ENCODE measurements at regions of chr1 and their contacts with region 1.

Region 1: DNA sequence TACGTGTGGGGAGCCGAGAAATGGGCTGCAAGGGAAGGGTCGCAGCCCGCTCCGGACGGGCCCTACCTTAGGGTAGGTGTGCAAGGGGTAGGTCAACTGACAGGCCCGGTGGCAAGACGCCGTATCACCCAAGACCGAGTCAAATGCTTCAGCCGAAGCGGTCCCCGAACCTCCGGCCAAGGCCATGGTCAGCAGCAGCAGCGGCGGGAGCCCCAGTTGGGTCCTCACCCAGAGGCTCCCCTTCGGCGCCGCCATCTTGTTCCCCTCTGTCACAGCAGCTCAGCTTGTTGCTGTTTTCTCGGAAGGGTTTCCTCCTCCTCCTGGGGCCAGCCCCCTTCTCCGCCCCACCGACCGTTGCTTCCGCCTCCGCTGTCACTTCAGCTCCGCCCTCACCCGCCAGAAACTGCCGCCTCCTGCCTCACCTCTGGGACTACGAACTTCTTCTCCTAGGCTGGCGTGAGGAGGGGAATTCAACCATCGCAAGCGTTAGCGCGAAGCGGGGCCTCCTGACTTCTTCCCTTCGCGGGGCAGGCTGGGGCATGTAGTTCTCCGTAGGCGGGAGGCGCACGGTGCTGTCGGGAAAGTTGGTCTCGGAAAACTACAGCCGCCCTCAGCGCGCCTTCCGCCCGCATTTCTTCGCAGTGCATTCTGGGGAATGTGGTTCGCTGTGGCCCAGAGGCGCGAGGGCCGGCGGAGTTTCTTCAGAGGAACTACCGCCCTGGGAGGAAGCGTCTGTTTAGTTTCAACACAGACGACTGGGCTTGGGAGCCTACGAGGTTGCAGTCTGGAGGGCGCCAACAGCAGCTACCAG is at the starts of genes TCEANC2 and TMEM59:
- DNase-seq: peak; percentile 98 to 99 (median 99)
- H3K4me3 ChIP-seq: peak within 1 kb of the TSS; percentile 90 to 99 (median 93)
- H3K4me3 Mint-ChIP-seq: no peak within 1 kb of the TSS
- H3K27ac ChIP-seq: peak within 1 kb of the TSS; percentile 89 to 97
- H3K27ac Mint-ChIP-seq: peak within 1 kb of the TSS in 1 of 7 donors; percentile 69
- H3K4me1 ChIP-seq: peaks cover 22 to 38% of the 10 kb centered on the region in 2 donors
- H3K4me1 Mint-ChIP-seq: peaks cover 27% of the 10 kb centered on the region
- H3K27me3 ChIP-seq: no peaks in the 10 kb centered on the region
- H3K27me3 Mint-ChIP-seq: no peaks in the 10 kb centered on the region
- CTCF ChIP-seq: no peak
- polyA plus RNA-seq, gene TCEANC2: 3.0 to 6.7 (median 3.8) TPM
- polyA plus RNA-seq, gene TMEM59: 169 to 925 (median 831) TPM

Region 2: GRCh38 chr1:53837924-53838652 is 215.1 kb before region 1 on chr1 and contains the start of gene NDC1:
- intact Hi-C with region 1: loop called (anchors 2 to 5 kb)
- DNase-seq: peak; percentile 86 to 89 (median 88)
- H3K4me3 ChIP-seq: peak within 1 kb of the TSS; percentile 83 to 93 (median 86)
- H3K4me3 Mint-ChIP-seq: peak within 1 kb of the TSS; percentile 93 to 98
- H3K27ac ChIP-seq: peak within 1 kb of the TSS; percentile 87 to 89
- H3K27ac Mint-ChIP-seq: peak within 1 kb of the TSS; percentile 94 to 99 (median 97)
- H3K4me1 ChIP-seq: peaks cover 8 to 16% of the 10 kb centered on the region in 2 donors
- H3K4me1 Mint-ChIP-seq: peaks cover 22% of the 10 kb centered on the region
- H3K27me3 ChIP-seq: no peaks in the 10 kb centered on the region
- H3K27me3 Mint-ChIP-seq: peaks cover 1 to 4% (median 2%) of the 10 kb centered on the region in 3 donors
- CTCF ChIP-seq: peak; percentile 5
- polyA plus RNA-seq, gene NDC1: 3.0 to 6.1 (median 4.7) TPM

Region 3: DNA sequence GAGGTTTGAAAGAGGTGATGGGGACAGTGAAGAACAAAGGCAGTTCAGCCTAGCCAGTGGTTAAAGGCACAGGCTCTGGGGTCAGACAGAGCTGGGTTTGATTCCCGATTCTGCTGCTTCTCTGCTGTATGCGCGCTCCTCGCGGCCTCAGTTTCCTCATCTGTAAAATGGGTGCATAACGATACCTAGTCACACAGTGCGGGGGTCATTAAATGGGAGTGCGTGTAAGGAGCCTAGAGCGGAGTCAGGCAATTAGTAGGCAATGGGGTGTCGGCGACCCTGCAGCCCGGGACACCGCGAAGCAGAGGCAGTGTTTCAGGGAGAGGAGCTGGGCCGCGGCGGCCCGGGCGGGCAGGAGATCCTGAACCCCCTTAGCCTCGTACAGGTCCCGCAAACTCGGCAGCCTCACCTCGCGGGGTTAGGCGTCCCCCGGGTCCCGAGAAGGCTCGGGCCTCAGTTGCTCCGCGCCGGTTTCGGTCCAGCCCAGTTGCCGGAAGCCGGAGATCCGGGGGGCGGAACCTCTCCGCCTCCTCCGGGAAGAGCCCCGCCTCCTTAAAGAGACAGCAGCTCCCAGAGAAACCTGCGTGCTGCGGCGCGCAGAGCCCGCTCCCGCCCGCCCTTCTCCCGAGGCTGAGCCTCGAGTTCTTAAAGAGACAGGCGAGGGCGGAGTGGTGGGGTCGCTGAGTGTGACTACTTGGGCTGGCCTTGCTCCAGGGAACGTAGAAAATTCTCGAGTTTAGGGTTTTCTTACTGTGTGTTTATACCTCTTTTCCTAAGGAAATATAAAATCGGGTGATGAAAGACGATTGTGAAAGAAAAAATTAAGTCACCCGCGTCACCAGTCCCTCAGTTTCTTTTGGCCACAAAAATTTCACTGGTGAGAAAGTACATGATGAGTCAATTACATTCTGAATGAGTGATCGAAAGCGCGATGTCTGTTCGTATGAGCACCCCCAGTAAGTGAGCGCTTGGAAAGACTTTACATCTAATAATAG is 163.5 kb before region 1 on chr1 and contains the start of gene YIPF1:
- intact Hi-C with region 1: loop called in 1 of 2 experiments (anchors 10 kb)
- DNase-seq: peak; percentile 68 to 92 (median 81)
- H3K4me3 ChIP-seq: peak within 1 kb of the TSS; percentile 68 to 88 (median 82)
- H3K4me3 Mint-ChIP-seq: peak within 1 kb of the TSS; percentile 94 to 96
- H3K27ac ChIP-seq: peak within 1 kb of the TSS; percentile 72 to 83
- H3K27ac Mint-ChIP-seq: peak within 1 kb of the TSS; percentile 89 to 97 (median 96)
- H3K4me1 ChIP-seq: peaks cover 29 to 43% of the 10 kb centered on the region in 2 donors
- H3K4me1 Mint-ChIP-seq: peaks cover 48% of the 10 kb centered on the region
- H3K27me3 ChIP-seq: no peaks in the 10 kb centered on the region
- H3K27me3 Mint-ChIP-seq: peaks cover 0 to 2% (median 2%) of the 10 kb centered on the region in 3 donors
- CTCF ChIP-seq: no peak
- polyA plus RNA-seq, gene YIPF1: 24.4 to 51.9 (median 42.1) TPM

Region 4: DNA sequence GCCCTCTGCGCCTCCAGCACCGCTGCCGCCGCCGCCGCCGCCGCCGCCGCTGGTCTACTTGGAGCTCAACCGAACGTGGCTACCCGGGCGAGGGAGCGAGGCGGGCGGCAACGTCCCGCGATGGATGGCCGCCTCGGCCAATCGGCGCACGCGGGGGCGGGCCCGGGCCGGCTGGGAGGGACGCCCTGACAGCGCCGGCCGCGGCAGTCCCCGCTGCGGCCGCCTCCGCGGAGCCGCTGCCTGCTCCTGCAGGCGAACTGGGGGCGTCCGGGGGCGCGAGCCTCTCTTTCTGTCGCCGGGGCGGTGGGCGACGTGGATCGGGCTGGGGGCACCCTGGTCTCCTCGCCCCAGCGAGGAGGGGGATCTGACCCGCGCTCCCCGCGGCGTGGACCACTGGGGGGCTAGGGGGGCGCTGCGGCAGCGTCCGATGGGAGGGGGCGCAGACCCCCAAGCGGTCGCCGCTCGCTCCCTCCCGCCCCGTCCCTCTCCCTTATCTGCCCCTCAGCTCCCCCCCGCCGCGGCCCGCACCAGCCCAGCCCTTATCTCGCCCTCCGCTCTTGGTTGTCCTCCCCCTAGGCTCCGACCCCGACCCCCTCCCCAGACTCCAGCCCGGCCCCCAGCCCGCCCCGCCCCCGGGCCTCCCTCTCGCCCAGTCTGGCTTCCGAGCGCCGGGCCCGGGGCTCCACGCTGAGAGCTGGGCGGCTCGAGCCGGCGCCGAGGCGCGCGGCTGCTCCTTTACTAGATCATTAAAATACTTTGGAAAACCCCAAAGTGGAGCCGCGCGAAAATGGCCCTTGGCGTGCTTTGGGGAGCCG is 353.4 kb after region 1 on chr1 and contains the start of gene SSBP3:
- intact Hi-C with region 1: loop called (anchors 2 to 10 kb)
- DNase-seq: peak; percentile 83 to 88 (median 85)
- H3K4me3 ChIP-seq: peak within 1 kb of the TSS; percentile 61 to 97 (median 96)
- H3K4me3 Mint-ChIP-seq: peak within 1 kb of the TSS; percentile 86 to 92
- H3K27ac ChIP-seq: peak within 1 kb of the TSS; percentile 57 to 92
- H3K27ac Mint-ChIP-seq: peak within 1 kb of the TSS; percentile 87 to 93 (median 90)
- H3K4me1 ChIP-seq: peaks cover 32 to 54% of the 10 kb centered on the region in 2 donors
- H3K4me1 Mint-ChIP-seq: peaks cover 51% of the 10 kb centered on the region
- H3K27me3 ChIP-seq: peaks cover 0 to 8% of the 10 kb centered on the region in 2 donors
- H3K27me3 Mint-ChIP-seq: peaks cover 8 to 13% (median 11%) of the 10 kb centered on the region in 3 donors
- CTCF ChIP-seq: peak; percentile 7
- polyA plus RNA-seq, gene SSBP3: 4.1 to 30.7 (median 4.3) TPM

Region 5: DNA sequence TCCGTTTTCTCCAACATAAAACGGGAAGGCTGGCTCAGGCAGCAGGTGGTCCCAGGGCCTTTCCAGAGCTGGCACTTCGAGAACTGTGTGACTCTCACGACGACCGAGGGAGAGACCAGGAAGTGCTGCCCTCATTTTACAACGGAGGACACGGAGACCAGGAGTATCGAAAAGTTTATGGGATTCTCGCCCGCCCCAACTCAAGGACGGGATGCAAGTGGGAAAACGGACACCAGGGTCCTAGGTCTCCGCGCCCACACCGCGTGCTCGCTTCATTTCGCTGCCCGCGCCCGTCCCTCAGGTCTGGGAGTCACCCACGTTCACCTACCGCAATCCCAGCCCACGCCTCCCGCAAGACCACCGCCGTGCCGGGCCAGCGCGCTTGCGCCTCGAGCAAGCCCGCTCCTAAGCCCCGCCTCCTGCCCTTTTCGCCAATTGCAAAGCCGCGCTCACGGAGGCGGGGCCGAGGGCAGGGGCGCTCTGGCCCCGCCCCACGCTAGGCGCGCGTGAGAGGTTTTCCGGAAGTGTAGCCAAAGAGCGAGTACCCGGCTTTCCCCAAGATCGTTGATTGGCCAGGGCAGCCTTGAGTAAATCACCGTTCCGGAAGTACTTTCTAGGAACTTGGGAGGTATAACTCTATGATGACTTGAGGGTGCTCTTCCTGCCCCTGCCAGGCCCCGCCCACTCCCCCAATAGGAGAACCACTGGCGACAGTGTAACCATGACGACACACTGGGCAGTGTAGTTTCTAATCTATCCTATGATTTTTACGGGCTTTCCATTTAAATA is 711.2 kb after region 1 on chr1 and contains the start of gene PARS2:
- intact Hi-C with region 1: loop called (anchors 2 to 5 kb)
- DNase-seq: peak; percentile 99
- H3K4me3 ChIP-seq: peak within 1 kb of the TSS; percentile 90 to 96 (median 91)
- H3K4me3 Mint-ChIP-seq: peak within 1 kb of the TSS; percentile 90 to 96
- H3K27ac ChIP-seq: peak within 1 kb of the TSS in 1 of 2 donors; percentile 88
- H3K27ac Mint-ChIP-seq: peak within 1 kb of the TSS; percentile 80 to 94 (median 90)
- H3K4me1 ChIP-seq: peaks cover 10 to 17% of the 10 kb centered on the region in 2 donors
- H3K4me1 Mint-ChIP-seq: peaks cover 19% of the 10 kb centered on the region
- H3K27me3 ChIP-seq: no peaks in the 10 kb centered on the region
- H3K27me3 Mint-ChIP-seq: peaks cover 0 to 1% (median 0%) of the 10 kb centered on the region in 3 donors
- CTCF ChIP-seq: no peak
- polyA plus RNA-seq, gene PARS2: 0.73 to 1.2 (median 0.92) TPM